Posterior cingulate gyrus (tissue), 11 donors: ENCODE measurements at regions of chr1 and their contacts with region 1.

Region 1: GRCh38 chr1:181105134-181106021 is 16.9 kb downstream of the IER5 start:
- DNase-seq: peak; percentile 78 to 99 (median 91)

Region 2: GRCh38 chr1:181088079-181089016 is 17.0 kb before region 1 on chr1 and contains the start of gene IER5:
- intact Hi-C with region 1: loop called (anchors 2 kb)
- DNase-seq: peak; percentile 92 to 99 (median 97)